ENCODE measurements at regions of chr1 and their contacts with region 1.

Region 1: DNA sequence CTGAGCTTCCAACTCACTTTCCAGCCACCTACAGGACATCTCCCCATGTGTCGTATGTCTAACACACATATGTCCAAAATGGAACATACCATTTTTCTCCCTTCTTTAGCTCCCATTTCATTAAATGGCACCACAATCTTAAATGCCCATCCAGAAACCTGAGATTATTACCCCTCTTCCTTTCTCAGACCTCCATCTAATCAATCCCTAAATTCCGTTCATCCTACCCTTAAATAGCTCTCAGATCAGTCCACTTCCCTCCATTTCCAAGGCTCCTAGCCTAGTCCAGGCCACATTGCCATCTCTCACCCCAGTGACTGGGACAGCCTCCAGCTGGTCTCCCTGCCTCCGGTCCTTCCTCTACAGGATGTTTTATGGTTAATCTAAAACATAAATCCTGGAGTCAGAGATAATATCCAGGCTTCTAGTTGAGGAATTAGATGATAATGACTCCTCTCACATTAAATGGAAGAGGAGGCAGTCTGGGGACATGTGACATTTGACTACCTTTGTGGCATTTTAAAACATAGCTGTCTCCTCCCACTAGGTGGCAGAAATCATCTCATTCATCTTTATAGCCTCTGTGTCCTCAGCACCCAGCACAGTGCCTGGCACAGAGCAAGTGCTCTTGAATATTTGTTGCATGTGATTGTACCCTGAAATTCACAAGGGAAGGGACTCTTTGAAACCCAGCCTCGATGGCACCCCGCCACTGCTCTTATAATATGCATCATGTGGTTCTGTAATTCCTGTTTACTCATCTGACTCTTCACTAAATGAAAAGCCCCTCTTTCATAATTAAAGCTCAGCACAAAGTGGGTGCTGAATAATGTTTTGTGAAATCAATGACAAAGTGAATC is 102.3 kb downstream of the TMEM53 start:
- DNase-seq: peak; percentile 18
- ATAC-seq: peak; percentile 68
- H3K4me3 Mint-ChIP-seq: no peak overlapping the region
- H3K27ac Mint-ChIP-seq: no peak overlapping the region
- H3K4me1 Mint-ChIP-seq: no peaks in the 10 kb centered on the region
- H3K27me3 Mint-ChIP-seq: no peaks in the 10 kb centered on the region
- CTCF ChIP-seq: peak; percentile 54

Region 2: GRCh38 chr1:44377925-44378784 is 193.8 kb before region 1 on chr1:
- CTCF ChIA-PET with region 1: interaction called, 12 read pairs
- POLR2A ChIA-PET with region 1: no interaction called
- intact Hi-C with region 1: no loop called
- DNase-seq: peak; percentile 75
- ATAC-seq: peak; percentile 60
- H3K4me3 Mint-ChIP-seq: no peak overlapping the region
- H3K27ac Mint-ChIP-seq: no peak overlapping the region
- H3K4me1 Mint-ChIP-seq: no peaks in the 10 kb centered on the region
- H3K27me3 Mint-ChIP-seq: peaks cover 1% of the 10 kb centered on the region
- CTCF ChIP-seq: peak; percentile 73

Region 3: DNA sequence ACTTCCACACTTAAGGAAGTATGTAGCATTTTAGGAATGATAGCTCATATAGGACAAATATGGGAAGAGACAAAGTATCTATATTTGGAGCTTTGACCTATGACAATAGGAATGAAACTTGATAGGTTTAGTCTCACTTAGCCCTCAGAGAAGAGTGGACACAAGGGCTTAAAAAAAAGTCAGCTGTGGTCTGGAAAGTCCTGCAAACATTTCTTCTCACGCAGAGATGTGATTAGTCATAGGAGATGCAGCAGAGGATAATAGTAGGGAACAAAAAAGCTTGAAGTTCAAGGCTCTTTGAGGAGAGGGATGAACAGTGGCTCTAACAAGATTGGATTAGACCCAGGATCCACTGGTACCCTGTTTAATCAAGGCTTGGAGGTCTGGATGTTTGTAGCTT is 181.7 kb before region 1 on chr1:
- CTCF ChIA-PET with region 1: no interaction called
- POLR2A ChIA-PET with region 1: no interaction called
- intact Hi-C with region 1: no loop called
- DNase-seq: no peak
- ATAC-seq: no peak
- H3K4me3 Mint-ChIP-seq: no peak overlapping the region
- H3K27ac Mint-ChIP-seq: no peak overlapping the region
- H3K4me1 Mint-ChIP-seq: no peaks in the 10 kb centered on the region
- H3K27me3 Mint-ChIP-seq: peaks cover 11% of the 10 kb centered on the region
- CTCF ChIP-seq: no peak

Region 4: GRCh38 chr1:44553771-44554170 is 18.2 kb before region 1 on chr1:
- CTCF ChIA-PET with region 1: interaction called, 16 read pairs
- POLR2A ChIA-PET with region 1: interaction called, 3 read pairs
- intact Hi-C with region 1: no loop called
- DNase-seq: no peak
- ATAC-seq: no peak
- H3K4me3 Mint-ChIP-seq: no peak overlapping the region
- H3K27ac Mint-ChIP-seq: no peak overlapping the region
- H3K4me1 Mint-ChIP-seq: no peaks in the 10 kb centered on the region
- H3K27me3 Mint-ChIP-seq: no peaks in the 10 kb centered on the region
- CTCF ChIP-seq: no peak

Region 5: DNA sequence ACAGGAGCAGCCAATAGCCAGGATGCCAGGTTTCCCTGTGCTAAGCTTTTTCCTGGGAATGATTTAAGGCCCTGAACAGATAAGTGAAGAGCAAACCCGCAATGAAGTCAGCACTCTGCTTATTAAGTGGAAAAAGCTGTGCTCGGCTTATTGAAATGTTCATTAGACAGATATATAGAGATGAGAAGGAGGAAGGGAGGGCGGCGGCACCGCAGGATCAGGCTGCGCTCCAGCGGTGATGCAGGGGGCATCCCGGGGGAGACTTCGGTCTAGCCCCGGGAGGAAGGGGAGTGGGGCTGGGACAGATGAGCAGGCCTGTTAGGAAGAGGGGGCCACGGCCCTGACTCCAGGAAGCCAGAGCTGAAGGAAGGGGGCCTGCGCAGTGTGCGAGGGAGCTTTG is 12.6 kb before region 1 on chr1:
- CTCF ChIA-PET with region 1: interaction called, 31 read pairs
- POLR2A ChIA-PET with region 1: interaction called, 3 read pairs
- intact Hi-C with region 1: no loop called
- DNase-seq: no peak
- ATAC-seq: no peak
- H3K4me3 Mint-ChIP-seq: no peak overlapping the region
- H3K27ac Mint-ChIP-seq: no peak overlapping the region
- H3K4me1 Mint-ChIP-seq: peaks cover 3% of the 10 kb centered on the region
- H3K27me3 Mint-ChIP-seq: peaks cover 4% of the 10 kb centered on the region
- CTCF ChIP-seq: no peak

Region 6: DNA sequence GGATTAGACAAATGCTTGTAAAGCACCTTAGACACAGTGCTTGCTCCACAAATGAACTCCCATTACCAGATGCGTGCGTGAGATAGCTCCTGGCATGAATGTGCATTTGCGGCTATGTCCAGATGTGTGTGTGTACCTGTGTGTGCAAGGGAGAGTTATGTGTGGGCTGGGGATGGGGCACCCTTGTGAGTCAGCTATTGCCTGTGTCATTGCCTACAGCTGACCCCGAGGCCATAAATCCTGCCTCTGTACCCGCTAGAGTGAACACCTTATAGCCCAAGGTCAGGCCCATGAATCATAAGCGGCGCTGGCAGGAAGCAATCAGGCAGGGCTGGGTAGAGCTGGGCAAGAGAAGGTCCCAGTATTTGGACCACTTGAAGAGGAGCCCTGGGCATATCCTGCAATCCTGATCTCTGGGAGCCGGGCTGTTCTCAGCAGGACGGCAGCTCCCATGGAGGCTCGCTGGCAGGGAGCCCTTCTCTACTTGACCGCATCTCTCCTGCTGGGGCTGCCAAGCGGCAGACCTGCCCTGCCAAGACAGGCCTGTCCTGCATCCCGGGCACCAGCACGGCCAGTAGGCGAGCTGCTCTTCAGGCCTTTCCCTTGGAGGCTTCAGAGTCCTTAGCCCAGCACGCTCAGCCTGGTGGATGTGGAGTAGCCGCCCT is 16.0 kb after region 1 on chr1:
- CTCF ChIA-PET with region 1: interaction called, 51 read pairs
- POLR2A ChIA-PET with region 1: no interaction called
- intact Hi-C with region 1: no loop called
- DNase-seq: no peak
- ATAC-seq: no peak
- H3K4me3 Mint-ChIP-seq: no peak overlapping the region
- H3K27ac Mint-ChIP-seq: no peak overlapping the region
- H3K4me1 Mint-ChIP-seq: no peaks in the 10 kb centered on the region
- H3K27me3 Mint-ChIP-seq: no peaks in the 10 kb centered on the region
- CTCF ChIP-seq: no peak

Region 7: DNA sequence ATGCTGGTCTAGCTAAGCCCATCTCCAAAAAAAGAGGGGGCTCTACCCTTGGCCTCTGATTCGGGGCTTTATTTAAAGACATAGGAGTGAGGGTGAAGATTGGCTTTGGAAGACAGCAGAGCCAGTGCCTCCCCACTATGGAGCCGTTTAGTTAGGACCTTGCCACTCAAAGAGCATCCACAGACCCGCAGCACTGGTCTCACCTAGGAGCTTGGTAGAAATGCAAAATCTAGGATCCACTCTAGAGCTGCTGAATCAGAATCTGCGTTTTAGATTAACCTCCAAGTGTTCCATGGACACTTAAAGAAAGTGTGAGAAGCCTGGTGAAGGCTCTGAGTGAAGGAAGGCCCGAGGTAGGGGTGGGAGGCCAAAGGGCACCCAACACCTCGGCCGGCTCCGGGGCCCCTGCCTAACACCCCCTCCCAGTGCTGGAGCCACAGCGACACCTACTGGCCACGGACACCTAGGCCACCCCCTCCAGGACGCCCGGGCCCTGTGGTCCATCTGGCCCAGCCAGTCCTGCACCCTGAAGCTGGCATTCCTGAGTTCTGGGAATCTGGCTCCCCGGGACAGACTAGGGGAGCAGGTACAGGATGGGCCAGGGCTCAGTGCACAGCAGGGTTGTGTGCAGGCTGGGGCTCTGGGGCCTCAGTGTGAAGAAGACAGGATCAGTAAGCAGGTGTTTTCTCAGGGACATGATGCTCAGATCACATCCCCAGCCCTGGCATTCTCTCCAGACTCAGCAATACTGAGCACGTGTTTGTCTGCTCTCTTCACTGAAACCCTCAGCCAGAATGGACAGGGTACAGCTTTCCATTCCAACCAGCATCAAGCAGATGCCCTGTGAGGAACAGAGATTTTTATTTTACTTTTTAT is 23.2 kb after region 1 on chr1:
- CTCF ChIA-PET with region 1: interaction called, 51 read pairs
- POLR2A ChIA-PET with region 1: no interaction called
- intact Hi-C with region 1: no loop called
- DNase-seq: peak; percentile 85
- ATAC-seq: peak; percentile 97
- H3K4me3 Mint-ChIP-seq: no peak overlapping the region
- H3K27ac Mint-ChIP-seq: no peak overlapping the region
- H3K4me1 Mint-ChIP-seq: no peaks in the 10 kb centered on the region
- H3K27me3 Mint-ChIP-seq: no peaks in the 10 kb centered on the region
- CTCF ChIP-seq: peak; percentile 98

Region 8: GRCh38 chr1:44855742-44856141 is 283.8 kb after region 1 on chr1:
- CTCF ChIA-PET with region 1: no interaction called
- POLR2A ChIA-PET with region 1: no interaction called
- intact Hi-C with region 1: no loop called
- DNase-seq: no peak
- ATAC-seq: no peak
- H3K4me3 Mint-ChIP-seq: no peak overlapping the region
- H3K27ac Mint-ChIP-seq: no peak overlapping the region
- H3K4me1 Mint-ChIP-seq: peaks cover 1% of the 10 kb centered on the region
- H3K27me3 Mint-ChIP-seq: no peaks in the 10 kb centered on the region
- CTCF ChIP-seq: no peak